Endothelial cell of umbilical vein (primary cell): ENCODE measurements at regions of chr9 and their contacts with region 1.

Region 1: DNA sequence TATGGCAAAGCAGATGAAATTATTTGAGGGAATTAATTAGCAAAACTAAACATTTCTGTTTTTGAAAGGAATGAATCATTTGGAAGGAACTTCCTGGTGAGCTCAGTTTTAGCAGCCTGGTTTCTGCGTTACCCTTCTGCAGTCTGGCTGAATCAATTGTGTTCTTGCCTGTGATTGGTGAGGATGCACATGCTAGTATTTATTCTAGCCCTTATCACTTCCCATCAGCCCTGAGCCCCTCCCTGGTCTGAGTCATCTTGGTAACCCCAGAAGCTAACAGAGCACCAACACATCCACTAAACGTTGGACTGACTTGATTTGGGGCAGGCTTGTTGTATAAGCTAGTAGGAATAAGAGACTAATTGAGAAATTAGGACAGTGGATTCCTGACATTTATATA is 6.6 kb downstream of the TJP2 start:
- DNase-seq: peak; percentile 98
- H3K4me3 ChIP-seq: peak overlapping the region in 1 of 3 experiments; percentile 36
- H3K27ac ChIP-seq: peak overlapping the region; percentile 98
- H3K4me1 ChIP-seq: peaks cover 51% of the 10 kb centered on the region
- H3K27me3 ChIP-seq: no peaks in the 10 kb centered on the region
- CTCF ChIP-seq: no peak
- POLR2A ChIP-seq: no peak

Region 2: GRCh38 chr9:69066955-69067354 is 113.7 kb before region 1 on chr9:
- CTCF ChIA-PET with region 1: no interaction called
- POLR2A ChIA-PET with region 1: no interaction called
- dilution Hi-C with region 1: loop called (anchors 10 kb)
- intact Hi-C with region 1: no loop called
- DNase-seq: no peak
- H3K4me3 ChIP-seq: no peak overlapping the region
- H3K27ac ChIP-seq: no peak overlapping the region
- H3K4me1 ChIP-seq: no peaks in the 10 kb centered on the region
- H3K27me3 ChIP-seq: no peaks in the 10 kb centered on the region
- CTCF ChIP-seq: no peak
- POLR2A ChIP-seq: no peak

Region 3: GRCh38 chr9:69097064-69097463 is 83.6 kb before region 1 on chr9:
- CTCF ChIA-PET with region 1: interaction called, 5 read pairs
- POLR2A ChIA-PET with region 1: no interaction called
- dilution Hi-C with region 1: no loop called
- intact Hi-C with region 1: loop called (anchors 1 kb)
- DNase-seq: peak; percentile 93
- H3K4me3 ChIP-seq: no peak overlapping the region
- H3K27ac ChIP-seq: peak overlapping the region; percentile 89
- H3K4me1 ChIP-seq: peaks cover 41% of the 10 kb centered on the region
- H3K27me3 ChIP-seq: no peaks in the 10 kb centered on the region
- CTCF ChIP-seq: no peak
- POLR2A ChIP-seq: peak; percentile 82

Region 4: GRCh38 chr9:69131682-69132081 is 49.0 kb before region 1 on chr9:
- CTCF ChIA-PET with region 1: no interaction called
- POLR2A ChIA-PET with region 1: no interaction called
- dilution Hi-C with region 1: no loop called
- intact Hi-C with region 1: no loop called
- DNase-seq: peak; percentile 53
- H3K4me3 ChIP-seq: no peak overlapping the region
- H3K27ac ChIP-seq: peak overlapping the region; percentile 16
- H3K4me1 ChIP-seq: peaks cover 29% of the 10 kb centered on the region
- H3K27me3 ChIP-seq: no peaks in the 10 kb centered on the region
- CTCF ChIP-seq: no peak
- POLR2A ChIP-seq: no peak

Region 5: DNA sequence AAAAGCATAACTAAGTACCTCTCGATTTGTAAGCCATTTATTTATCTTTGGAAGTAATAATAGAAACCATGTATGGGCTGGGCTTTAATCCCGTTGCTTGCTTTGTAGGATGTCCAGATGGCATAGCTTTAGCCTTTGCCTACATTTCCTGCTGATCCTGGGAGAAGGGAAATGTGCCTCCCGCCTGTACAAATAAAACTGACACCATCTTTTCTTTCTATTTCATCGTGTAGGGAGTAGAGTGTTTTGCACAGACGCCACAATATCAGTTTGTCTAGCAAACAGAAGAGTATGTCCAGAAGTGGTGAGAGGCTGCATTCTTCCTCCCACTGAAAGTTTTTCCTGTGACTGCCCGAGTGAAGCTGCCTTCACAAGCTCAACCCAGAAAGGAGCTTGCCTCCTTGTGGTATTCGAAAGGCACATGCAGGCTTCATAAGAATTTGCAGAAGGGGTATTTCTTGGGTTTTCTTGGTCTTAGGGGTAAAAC is 31.3 kb before region 1 on chr9:
- CTCF ChIA-PET with region 1: interaction called, 8 read pairs
- POLR2A ChIA-PET with region 1: interaction called, 4 read pairs
- dilution Hi-C with region 1: no loop called
- intact Hi-C with region 1: loop called (anchors 1 kb)
- DNase-seq: peak; percentile 96
- H3K4me3 ChIP-seq: peak overlapping the region in 1 of 3 experiments; percentile 45
- H3K27ac ChIP-seq: peak overlapping the region; percentile 51
- H3K4me1 ChIP-seq: peaks cover 22% of the 10 kb centered on the region
- H3K27me3 ChIP-seq: no peaks in the 10 kb centered on the region
- CTCF ChIP-seq: peak; percentile 21 to 49
- POLR2A ChIP-seq: peak; percentile 47

Region 6: DNA sequence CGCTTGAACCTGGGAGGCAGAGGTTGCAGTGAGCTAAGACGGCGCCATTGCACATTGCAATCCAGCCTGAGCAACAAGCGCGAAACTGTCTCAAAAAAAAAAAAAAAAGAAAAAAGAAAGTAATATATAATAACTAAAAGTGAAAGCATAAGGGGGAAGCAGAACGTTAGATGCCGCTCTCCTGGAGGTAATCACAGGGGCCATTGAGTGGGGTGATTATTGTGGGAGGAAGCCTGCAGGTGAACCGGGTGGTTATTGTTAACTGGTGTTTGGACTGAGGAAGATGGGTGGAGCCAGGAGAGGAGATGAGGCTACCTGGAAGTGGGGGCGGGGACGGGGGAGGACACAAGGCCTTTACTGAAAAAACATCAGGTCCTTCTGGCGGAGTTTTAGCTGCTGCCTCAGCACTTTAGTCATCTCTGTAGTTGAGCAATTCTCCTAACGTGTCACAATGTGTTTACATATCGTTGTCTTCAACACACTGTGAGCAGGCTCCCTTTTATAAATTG is 11.9 kb before region 1 on chr9:
- CTCF ChIA-PET with region 1: interaction called, 7 read pairs
- POLR2A ChIA-PET with region 1: interaction called, 3 read pairs
- dilution Hi-C with region 1: no loop called
- intact Hi-C with region 1: loop called (anchors 1 kb)
- DNase-seq: no peak
- H3K4me3 ChIP-seq: no peak overlapping the region
- H3K27ac ChIP-seq: no peak overlapping the region
- H3K4me1 ChIP-seq: peaks cover 35% of the 10 kb centered on the region
- H3K27me3 ChIP-seq: no peaks in the 10 kb centered on the region
- CTCF ChIP-seq: no peak
- POLR2A ChIP-seq: no peak